ENCODE measurements at regions of chr7 and their contacts with region 1.

Region 1: DNA sequence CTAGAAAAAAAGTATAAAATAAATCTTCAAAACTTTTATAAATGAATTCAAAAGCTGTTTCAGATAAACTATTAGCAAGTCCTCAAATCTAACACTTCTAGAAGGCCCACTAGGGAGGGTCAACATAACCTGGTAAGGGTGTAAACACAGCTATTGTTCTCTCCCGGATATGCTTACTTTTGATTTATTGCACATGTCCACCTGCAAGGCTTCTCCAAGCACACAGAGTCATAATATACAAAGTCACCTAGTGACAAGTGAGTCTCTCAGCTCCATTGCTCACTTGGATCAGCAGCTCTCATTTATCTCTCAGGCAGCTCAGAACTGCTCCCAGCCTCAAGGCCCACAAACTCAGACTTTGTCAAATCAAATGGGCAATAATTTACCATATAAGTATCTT is 44.0 kb upstream of the COL1A2 start:
- DNase-seq: no peak
- H3K4me3 ChIP-seq: no peak overlapping the region
- H3K27ac ChIP-seq: no peak overlapping the region
- H3K4me1 ChIP-seq: peaks cover 0 to 30% (median 23%) of the 10 kb centered on the region in 4 donors
- H3K27me3 ChIP-seq: no peaks in the 10 kb centered on the region
- CTCF ChIP-seq: no peak
- EP300 ChIP-seq: no peak
- POLR2A ChIP-seq: no peak

Region 2: DNA sequence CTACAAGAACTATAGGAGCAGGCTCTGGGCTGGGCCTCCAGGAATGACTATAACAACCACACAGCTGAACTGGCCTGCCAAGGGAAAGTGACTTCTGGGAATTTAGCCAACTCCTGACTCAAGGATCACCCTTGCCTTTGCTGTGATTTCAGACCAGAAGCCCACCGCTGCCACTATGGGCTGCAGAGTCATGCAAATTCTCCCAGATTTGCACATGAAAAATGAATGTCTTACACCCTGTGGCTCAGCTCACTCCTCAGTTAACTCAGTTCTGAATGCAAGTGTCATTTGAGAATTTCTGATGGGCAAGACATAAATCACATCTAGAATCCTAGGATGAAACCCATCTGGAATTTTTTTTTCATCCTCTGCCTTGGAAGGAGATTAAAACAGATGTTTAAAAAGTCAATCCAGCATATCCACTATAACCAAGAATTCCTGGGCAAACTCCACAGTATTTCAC is 160.1 kb before region 1 on chr7:
- intact Hi-C with region 1: no loop called
- DNase-seq: no peak
- H3K4me3 ChIP-seq: no peak overlapping the region
- H3K27ac ChIP-seq: no peak overlapping the region
- H3K4me1 ChIP-seq: no peaks in the 10 kb centered on the region
- H3K27me3 ChIP-seq: no peaks in the 10 kb centered on the region
- CTCF ChIP-seq: no peak
- EP300 ChIP-seq: no peak
- POLR2A ChIP-seq: no peak

Region 3: DNA sequence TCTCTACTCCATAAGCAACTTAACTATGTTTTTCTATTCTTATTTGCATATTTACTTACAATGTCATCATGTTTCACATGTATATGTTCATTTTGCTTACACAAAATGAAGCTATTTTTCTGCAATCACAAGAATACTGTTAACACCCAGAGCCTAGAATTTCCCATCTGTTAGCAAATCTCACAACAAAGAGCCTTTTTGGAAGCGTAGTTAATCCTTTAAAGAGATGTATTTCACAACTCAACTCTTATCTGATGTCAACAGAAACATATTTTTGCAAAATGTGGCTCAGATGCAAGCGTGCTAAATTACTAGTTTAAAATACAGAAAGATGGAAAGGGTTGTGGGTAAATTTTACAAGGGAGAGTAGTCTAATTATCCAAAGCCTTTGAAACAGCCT is 66.6 kb before region 1 on chr7:
- intact Hi-C with region 1: no loop called
- DNase-seq: no peak
- H3K4me3 ChIP-seq: no peak overlapping the region
- H3K27ac ChIP-seq: no peak overlapping the region
- H3K4me1 ChIP-seq: no peaks in the 10 kb centered on the region
- H3K27me3 ChIP-seq: no peaks in the 10 kb centered on the region
- CTCF ChIP-seq: no peak
- EP300 ChIP-seq: no peak
- POLR2A ChIP-seq: no peak

Region 4: DNA sequence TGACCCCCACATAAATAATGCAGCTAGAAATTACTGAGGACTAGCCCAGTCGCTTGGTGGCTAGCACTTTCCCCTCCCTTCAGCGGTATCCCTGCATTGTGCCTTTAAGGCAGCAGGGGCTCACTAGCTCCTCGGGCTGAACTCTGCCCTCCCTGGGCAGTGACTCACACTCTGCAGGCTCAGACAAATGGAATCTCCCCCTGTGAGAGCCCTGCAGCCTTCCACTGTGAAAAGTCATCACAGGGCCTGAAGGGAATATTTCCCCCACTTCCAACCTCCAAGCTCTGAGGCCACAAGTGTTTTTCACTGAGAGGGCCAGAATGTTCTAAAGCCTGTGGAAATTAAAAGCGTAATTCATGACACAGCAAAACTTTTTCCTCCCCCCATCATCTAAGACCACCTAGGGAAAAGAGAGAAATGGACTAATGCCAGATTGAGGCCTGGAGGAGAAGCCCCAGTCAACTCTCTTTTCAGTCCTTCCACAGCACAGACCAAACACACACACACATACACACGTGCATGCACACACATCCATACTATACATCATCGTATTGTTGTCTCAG is 49.6 kb before region 1 on chr7:
- intact Hi-C with region 1: loop called (anchors 5 kb)
- DNase-seq: peak; percentile 91
- H3K4me3 ChIP-seq: no peak overlapping the region
- H3K27ac ChIP-seq: peak overlapping the region; percentile 78 to 93 (median 88)
- H3K4me1 ChIP-seq: peaks cover 0 to 79% (median 67%) of the 10 kb centered on the region in 4 donors
- H3K27me3 ChIP-seq: no peaks in the 10 kb centered on the region
- CTCF ChIP-seq: no peak
- EP300 ChIP-seq: peak in 1 of 4 donors; percentile 15
- POLR2A ChIP-seq: no peak

Region 5: GRCh38 chr7:94414481-94414880 is 63.7 kb after region 1 on chr7:
- intact Hi-C with region 1: no loop called
- DNase-seq: no peak
- H3K4me3 ChIP-seq: no peak overlapping the region
- H3K27ac ChIP-seq: peak overlapping the region in 3 of 4 donors; percentile 42 to 62 (median 55)
- H3K4me1 ChIP-seq: peaks cover 0 to 54% (median 6%) of the 10 kb centered on the region in 4 donors
- H3K27me3 ChIP-seq: no peaks in the 10 kb centered on the region
- CTCF ChIP-seq: no peak
- EP300 ChIP-seq: no peak
- POLR2A ChIP-seq: no peak

Measured in sigmoid colon (tissue), 7 donors.